Prostate gland (tissue), 2 donors: ENCODE measurements at regions of chr4 and their contacts with region 1.

Region 1: GRCh38 chr4:105520817-105521790 is 31.3 kb upstream of the ARHGEF38 start:
- DNase-seq: peak; percentile 46
- H3K4me3 ChIP-seq: no peak overlapping the region
- H3K27ac ChIP-seq: no peak overlapping the region
- H3K4me1 ChIP-seq: no peaks in the 10 kb centered on the region
- H3K27me3 ChIP-seq: no peaks in the 10 kb centered on the region
- CTCF ChIP-seq: peak in 3 of 4 experiments; percentile 57 to 68 (median 60)
- POLR2A ChIP-seq: no peak

Region 2: GRCh38 chr4:105191621-105192210 is 329.4 kb before region 1 on chr4:
- intact Hi-C with region 1: no loop called
- DNase-seq: no peak
- H3K4me3 ChIP-seq: no peak overlapping the region
- H3K27ac ChIP-seq: no peak overlapping the region
- H3K4me1 ChIP-seq: no peaks in the 10 kb centered on the region
- H3K27me3 ChIP-seq: no peaks in the 10 kb centered on the region
- CTCF ChIP-seq: no peak
- POLR2A ChIP-seq: no peak

Region 3: GRCh38 chr4:105666693-105667092 is 145.6 kb after region 1 on chr4:
- intact Hi-C with region 1: no loop called
- DNase-seq: no peak
- H3K4me3 ChIP-seq: no peak overlapping the region
- H3K27ac ChIP-seq: no peak overlapping the region
- H3K4me1 ChIP-seq: no peaks in the 10 kb centered on the region
- H3K27me3 ChIP-seq: no peaks in the 10 kb centered on the region
- CTCF ChIP-seq: peak in 2 of 4 experiments; percentile 26 to 28
- POLR2A ChIP-seq: no peak

Region 4: GRCh38 chr4:105715692-105716278 is 194.7 kb after region 1 on chr4:
- intact Hi-C with region 1: no loop called
- DNase-seq: no peak
- H3K4me3 ChIP-seq: no peak overlapping the region
- H3K27ac ChIP-seq: no peak overlapping the region
- H3K4me1 ChIP-seq: no peaks in the 10 kb centered on the region
- H3K27me3 ChIP-seq: no peaks in the 10 kb centered on the region
- CTCF ChIP-seq: peak; percentile 12 to 70 (median 60)
- POLR2A ChIP-seq: no peak

Region 5: DNA sequence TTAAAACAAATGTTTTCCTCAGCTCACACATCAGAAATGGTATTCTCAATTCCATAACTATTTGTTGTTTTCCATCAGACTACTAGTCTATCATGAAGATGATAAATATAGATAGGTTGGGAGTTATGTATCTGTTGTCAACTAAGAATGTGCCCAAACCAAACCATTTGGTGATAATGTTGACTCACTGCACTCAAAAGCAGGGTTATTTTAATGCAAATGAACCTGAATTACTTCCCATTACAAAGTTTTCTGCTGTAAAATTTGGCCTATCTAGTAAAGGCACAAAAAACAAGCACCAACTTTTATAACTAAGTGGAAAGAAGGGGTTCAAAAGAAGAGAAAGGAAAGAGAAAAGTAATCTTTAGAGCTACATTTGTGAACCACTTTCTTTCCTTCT is 701.4 kb after region 1 on chr4:
- intact Hi-C with region 1: loop called (anchors 10 kb)
- DNase-seq: no peak
- H3K4me3 ChIP-seq: no peak overlapping the region
- H3K27ac ChIP-seq: no peak overlapping the region
- H3K4me1 ChIP-seq: no peaks in the 10 kb centered on the region
- H3K27me3 ChIP-seq: no peaks in the 10 kb centered on the region
- CTCF ChIP-seq: no peak
- POLR2A ChIP-seq: no peak